ENCODE measurements at regions of chr10 and their contacts with region 1.

Region 1: DNA sequence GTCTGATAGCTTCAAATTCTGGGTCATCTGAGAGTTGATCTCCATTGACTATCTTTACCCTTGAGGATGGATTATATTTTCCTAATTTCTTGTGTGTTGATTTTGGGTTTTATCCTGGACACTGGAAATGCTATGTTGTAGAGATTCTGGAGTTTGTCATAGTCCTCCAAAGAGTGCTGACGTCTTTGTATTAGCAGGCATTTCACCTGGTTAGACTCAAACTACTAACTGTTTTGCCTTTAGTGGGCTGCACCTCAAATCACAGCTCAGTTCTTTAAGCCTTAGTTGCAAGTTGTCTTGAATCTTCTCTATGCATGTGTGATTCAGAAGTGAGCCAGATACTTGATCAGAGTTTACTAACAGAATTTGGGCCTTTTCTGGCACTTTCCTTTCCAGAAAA is 264.3 kb downstream of the RPS24 start:
- DNase-seq: no peak
- ATAC-seq: no peak
- H3K4me3 ChIP-seq: no peak overlapping the region
- H3K27ac ChIP-seq: no peak overlapping the region
- H3K4me1 ChIP-seq: peaks cover 10% of the 10 kb centered on the region
- H3K27me3 ChIP-seq: peaks cover 7% of the 10 kb centered on the region
- CTCF ChIP-seq: no peak

Region 2: DNA sequence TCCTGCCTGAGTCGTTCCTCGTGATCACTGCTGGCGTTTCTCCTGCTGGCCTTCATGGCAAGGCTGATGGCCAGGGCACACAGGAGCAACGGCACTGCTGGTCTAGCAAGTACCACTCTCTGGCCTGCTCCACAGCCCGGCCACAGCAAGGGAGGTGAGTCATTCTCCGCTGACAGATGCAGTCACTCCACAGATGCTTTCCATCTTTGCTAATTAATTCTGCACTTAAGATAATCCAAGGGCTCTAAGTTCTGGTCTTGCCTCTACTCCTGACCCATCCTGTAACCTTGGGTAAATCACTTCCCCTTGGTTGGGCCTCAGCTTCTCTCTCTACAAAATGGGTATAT is 20.0 kb before region 1 on chr10:
- CTCF ChIA-PET with region 1: interaction called, 11 read pairs
- POLR2A ChIA-PET with region 1: interaction called, 4 read pairs
- intact Hi-C with region 1: no loop called
- DNase-seq: peak; percentile 68
- ATAC-seq: peak; percentile 53
- H3K4me3 ChIP-seq: no peak overlapping the region
- H3K27ac ChIP-seq: no peak overlapping the region
- H3K4me1 ChIP-seq: no peaks in the 10 kb centered on the region
- H3K27me3 ChIP-seq: peaks cover 78% of the 10 kb centered on the region
- CTCF ChIP-seq: no peak